CD4-positive, alpha-beta memory T cell (primary cell): ENCODE measurements at regions of chr10 and their contacts with region 1.

Region 1: DNA sequence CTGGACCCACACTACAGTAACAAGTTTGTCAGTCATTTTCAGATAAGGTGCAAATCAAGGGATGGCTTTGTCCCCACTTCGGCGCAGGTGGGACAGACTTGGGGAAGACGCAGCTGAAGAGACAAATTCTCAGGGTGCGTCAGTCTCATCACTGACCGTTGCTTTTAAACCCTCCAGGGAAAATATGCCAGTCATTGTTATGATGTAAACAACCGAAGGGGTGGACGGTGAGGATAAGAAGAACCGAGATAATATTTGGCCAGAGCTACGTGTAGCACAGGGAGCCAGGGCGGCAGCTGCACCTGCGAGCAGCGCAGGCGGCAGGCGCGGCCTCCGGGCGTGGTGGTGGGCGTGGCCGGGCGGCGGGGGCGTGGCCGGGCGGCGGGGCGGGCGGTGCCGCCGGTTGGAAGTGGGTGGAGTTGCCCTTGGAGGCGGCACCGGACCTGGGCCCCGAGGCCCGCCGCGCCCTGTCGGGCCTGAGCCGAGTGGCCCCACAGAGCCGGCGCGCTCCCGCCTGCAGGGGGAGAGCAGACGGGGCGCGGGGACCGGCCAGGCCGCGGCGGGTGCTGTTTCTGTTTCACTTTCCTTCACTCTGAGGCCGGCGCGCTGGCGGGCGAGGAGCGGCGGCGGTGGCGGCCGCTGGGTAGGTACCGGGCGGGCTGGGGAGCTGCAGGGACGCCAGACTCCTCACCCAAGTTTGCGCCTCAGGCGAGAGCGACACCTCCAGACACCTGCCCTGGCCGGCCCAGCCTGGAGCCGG is at the start of gene PCGF5:
- DNase-seq: peak; percentile 90 to 93 (median 93)
- H3K4me3 ChIP-seq: peak within 1 kb of the TSS; percentile 25 to 65
- H3K4me3 Mint-ChIP-seq: peak within 1 kb of the TSS; percentile 86 to 93 (median 90)
- H3K27ac ChIP-seq: peak within 1 kb of the TSS; percentile 85
- H3K27ac Mint-ChIP-seq: peak within 1 kb of the TSS; percentile 89 to 95 (median 94)
- H3K4me1 ChIP-seq: peaks cover 48% of the 10 kb centered on the region
- H3K4me1 Mint-ChIP-seq: peaks cover 41 to 63% (median 49%) of the 10 kb centered on the region in 4 donors
- H3K27me3 ChIP-seq: no peaks in the 10 kb centered on the region
- H3K27me3 Mint-ChIP-seq: no peaks in the 10 kb centered on the region
- total RNA-seq, gene PCGF5: 51.0 to 52.9 TPM

Region 2: DNA sequence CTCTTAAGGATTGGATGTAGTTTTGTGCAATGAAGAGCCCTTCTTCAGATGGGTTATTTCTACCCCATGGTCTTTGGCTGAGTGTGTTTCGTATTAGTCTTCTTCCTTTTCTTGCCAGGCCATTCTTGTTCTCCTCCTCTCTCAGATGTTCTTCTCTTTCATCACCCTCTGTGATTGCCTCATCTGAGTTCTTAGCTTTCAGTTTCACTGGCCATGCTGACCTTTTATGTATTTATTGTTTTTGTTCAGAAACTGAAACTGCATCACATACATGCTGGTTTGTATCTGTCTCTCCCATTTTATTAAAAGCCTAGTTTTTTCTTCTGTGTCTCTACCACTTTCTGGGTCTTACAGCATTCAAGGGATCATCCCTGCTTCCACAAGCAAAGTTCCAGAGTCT is 21.6 kb before region 1 on chr10:
- CTCF ChIA-PET with region 1: interaction called, 4 read pairs
- POLR2A ChIA-PET with region 1: interaction called, 15 read pairs
- intact Hi-C with region 1: loop called (anchors 2 kb)
- DNase-seq: peak; percentile 24 to 51 (median 42)
- H3K4me3 ChIP-seq: no peak overlapping the region
- H3K4me3 Mint-ChIP-seq: peak overlapping the region; percentile 21 to 73 (median 53)
- H3K27ac ChIP-seq: peak overlapping the region; percentile 41
- H3K27ac Mint-ChIP-seq: peak overlapping the region; percentile 75 to 96 (median 89)
- H3K4me1 ChIP-seq: peaks cover 87% of the 10 kb centered on the region
- H3K4me1 Mint-ChIP-seq: peaks cover 76 to 90% (median 82%) of the 10 kb centered on the region in 4 donors
- H3K27me3 ChIP-seq: no peaks in the 10 kb centered on the region
- H3K27me3 Mint-ChIP-seq: no peaks in the 10 kb centered on the region

Region 3: GRCh38 chr10:91409869-91410637 is 189.7 kb after region 1 on chr10 and contains the start of gene HECTD2:
- CTCF ChIA-PET with region 1: no interaction called
- POLR2A ChIA-PET with region 1: interaction called, 4 read pairs
- intact Hi-C with region 1: loop called (anchors 1 kb)
- DNase-seq: peak; percentile 78 to 90 (median 88)
- H3K4me3 ChIP-seq: peak within 1 kb of the TSS; percentile 88 to 92
- H3K4me3 Mint-ChIP-seq: peak within 1 kb of the TSS; percentile 88 to 97 (median 91)
- H3K27ac ChIP-seq: peak within 1 kb of the TSS; percentile 74
- H3K27ac Mint-ChIP-seq: peak within 1 kb of the TSS; percentile 78 to 97 (median 95)
- H3K4me1 ChIP-seq: peaks cover 20% of the 10 kb centered on the region
- H3K4me1 Mint-ChIP-seq: peaks cover 7 to 15% (median 11%) of the 10 kb centered on the region in 4 donors
- H3K27me3 ChIP-seq: no peaks in the 10 kb centered on the region
- H3K27me3 Mint-ChIP-seq: peaks cover 0 to under 1% of the 10 kb centered on the region in 2 donors
- total RNA-seq, gene HECTD2: 2.6 to 2.7 TPM